Activated CD8-positive, alpha-beta T cell treated with anti-CD3 and anti-CD28 coated beads, Interleukin-2, amount 10 ng/mL, durations not matched to agents 7 days and 5 days (primary cell): ENCODE measurements at regions of chr17 and their contacts with region 1.

Region 1: DNA sequence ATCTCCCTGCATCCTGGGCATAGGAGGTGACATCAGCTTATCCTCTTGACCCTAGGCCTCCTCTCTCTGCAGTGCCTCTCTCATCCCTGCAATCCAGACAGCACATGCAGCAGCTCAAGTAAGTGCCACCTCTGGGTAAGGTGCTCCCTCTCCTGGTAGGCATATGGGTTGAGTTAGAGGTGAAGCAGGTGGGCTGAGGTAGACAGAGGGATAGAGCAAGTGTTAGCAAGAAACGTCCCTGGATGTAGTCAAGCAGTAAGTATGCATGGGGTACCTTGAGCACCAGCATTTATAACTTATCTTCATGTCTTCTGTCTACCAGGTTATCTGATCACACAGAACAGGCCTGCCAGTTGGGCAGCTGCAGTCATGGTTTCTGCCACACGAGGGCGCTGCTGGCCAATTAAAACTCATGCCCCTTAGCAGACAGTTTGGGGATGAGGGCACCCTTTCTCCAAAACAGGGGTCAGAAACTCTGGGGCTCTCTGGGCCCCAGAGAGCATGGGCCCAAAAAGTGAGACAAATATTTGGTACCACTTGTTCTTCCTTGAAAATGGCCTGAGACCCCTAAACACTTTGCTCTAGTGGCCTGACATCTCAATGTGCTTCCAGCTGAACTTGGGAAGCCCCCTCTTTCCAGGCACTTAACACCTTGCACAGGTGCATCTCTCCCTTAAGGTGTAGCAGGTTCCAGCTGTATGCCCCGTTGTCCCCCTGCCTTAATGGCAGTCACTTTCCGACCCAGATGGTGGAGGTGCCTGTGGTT is 59.8 kb downstream of the NEUROD2 start:
- DNase-seq: peak; percentile 80
- ATAC-seq: peak; percentile 86
- H3K4me3 Mint-ChIP-seq: no peak overlapping the region
- H3K27ac Mint-ChIP-seq: no peak overlapping the region
- H3K4me1 Mint-ChIP-seq: no peaks in the 10 kb centered on the region
- H3K27me3 Mint-ChIP-seq: no peaks in the 10 kb centered on the region

Region 2: GRCh38 chr17:39132192-39132610 is 415.7 kb before region 1 on chr17:
- CTCF ChIA-PET with region 1: no interaction called
- POLR2A ChIA-PET with region 1: no interaction called
- DNase-seq: no peak
- ATAC-seq: no peak
- H3K4me3 Mint-ChIP-seq: no peak overlapping the region
- H3K27ac Mint-ChIP-seq: no peak overlapping the region
- H3K4me1 Mint-ChIP-seq: no peaks in the 10 kb centered on the region
- H3K27me3 Mint-ChIP-seq: no peaks in the 10 kb centered on the region

Region 3: DNA sequence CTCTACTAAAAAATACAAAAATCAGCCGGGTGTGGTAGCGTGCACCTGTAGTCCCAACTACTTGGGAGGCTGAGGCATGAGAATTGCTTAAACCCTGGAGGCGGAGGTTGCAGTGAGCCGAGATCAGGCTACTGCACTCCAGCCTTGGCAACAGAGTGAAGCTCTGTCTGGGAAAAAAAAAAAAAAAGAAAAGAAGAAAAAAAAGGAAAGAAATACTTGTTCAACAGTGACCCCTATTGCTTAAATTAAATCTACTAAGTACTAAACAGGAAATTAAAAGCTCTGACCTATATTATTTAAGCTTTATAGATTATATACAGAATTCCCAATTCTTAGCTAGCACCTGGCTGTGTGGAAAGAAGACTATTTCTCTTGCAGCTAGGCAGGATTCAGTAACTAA is 195.4 kb before region 1 on chr17:
- CTCF ChIA-PET with region 1: no interaction called
- POLR2A ChIA-PET with region 1: no interaction called
- DNase-seq: no peak
- ATAC-seq: no peak
- H3K4me3 Mint-ChIP-seq: no peak overlapping the region
- H3K27ac Mint-ChIP-seq: no peak overlapping the region
- H3K4me1 Mint-ChIP-seq: no peaks in the 10 kb centered on the region
- H3K27me3 Mint-ChIP-seq: no peaks in the 10 kb centered on the region

Region 4: GRCh38 chr17:39485555-39485954 is 62.3 kb before region 1 on chr17:
- CTCF ChIA-PET with region 1: no interaction called
- POLR2A ChIA-PET with region 1: no interaction called
- DNase-seq: no peak
- ATAC-seq: no peak
- H3K4me3 Mint-ChIP-seq: no peak overlapping the region
- H3K27ac Mint-ChIP-seq: no peak overlapping the region
- H3K4me1 Mint-ChIP-seq: peaks cover 7% of the 10 kb centered on the region
- H3K27me3 Mint-ChIP-seq: no peaks in the 10 kb centered on the region

Region 5: GRCh38 chr17:39527220-39527813 is 20.6 kb before region 1 on chr17:
- CTCF ChIA-PET with region 1: interaction called, 14 read pairs
- POLR2A ChIA-PET with region 1: no interaction called
- DNase-seq: no peak
- ATAC-seq: no peak
- H3K4me3 Mint-ChIP-seq: no peak overlapping the region
- H3K27ac Mint-ChIP-seq: no peak overlapping the region
- H3K4me1 Mint-ChIP-seq: peaks cover 16% of the 10 kb centered on the region
- H3K27me3 Mint-ChIP-seq: no peaks in the 10 kb centered on the region

Region 6: GRCh38 chr17:39572121-39572520 is 24.2 kb after region 1 on chr17:
- CTCF ChIA-PET with region 1: no interaction called
- POLR2A ChIA-PET with region 1: no interaction called
- DNase-seq: no peak
- ATAC-seq: no peak
- H3K4me3 Mint-ChIP-seq: no peak overlapping the region
- H3K27ac Mint-ChIP-seq: no peak overlapping the region
- H3K4me1 Mint-ChIP-seq: peaks cover 4% of the 10 kb centered on the region
- H3K27me3 Mint-ChIP-seq: peaks cover 12% of the 10 kb centered on the region